Naive thymus-derived CD4-positive, alpha-beta T cell (primary cell): ENCODE measurements at regions of chr4 and their contacts with region 1.

Region 1: DNA sequence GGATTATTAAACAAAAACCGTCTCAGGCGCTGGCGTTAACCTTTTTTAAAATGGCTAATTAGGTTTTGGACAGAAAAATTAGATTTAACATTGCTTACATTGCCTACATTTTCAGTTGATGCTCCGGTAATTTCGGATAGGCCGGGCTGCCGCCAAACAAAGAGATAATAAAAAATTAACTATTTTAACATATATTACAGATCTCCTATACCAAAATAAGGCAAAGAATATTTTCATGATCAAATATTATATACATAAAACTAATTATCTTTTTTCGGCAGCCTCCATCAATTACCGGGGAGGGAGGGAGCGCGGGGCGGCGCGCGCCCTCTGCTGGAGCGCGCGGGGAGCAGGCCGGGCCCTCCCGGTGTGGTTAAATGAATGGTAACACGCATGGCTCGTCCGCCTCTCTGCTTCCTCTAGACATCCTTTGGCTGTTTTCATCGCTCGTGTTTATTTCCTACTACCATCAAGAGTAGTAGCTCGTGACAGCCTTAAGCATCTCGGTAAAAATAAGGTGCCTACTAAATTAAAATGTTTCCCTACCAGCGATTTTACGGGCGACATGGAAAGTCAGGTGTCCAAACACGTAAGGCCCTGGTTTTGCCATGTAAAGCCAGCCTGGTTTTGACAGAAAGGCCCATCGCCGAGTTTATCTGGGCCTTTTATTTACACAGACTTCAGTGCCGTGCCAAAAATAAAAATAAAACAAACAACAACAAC is 52.4 kb upstream of the TMEM33 start:
- DNase-seq: peak in 7 of 9 donors; percentile 36 to 60 (median 45)
- ATAC-seq: peak; percentile 85
- H3K4me3 ChIP-seq: peak overlapping the region; percentile 55
- H3K4me3 Mint-ChIP-seq: peak overlapping the region in 9 of 10 donors; percentile 56 to 82 (median 76)
- H3K27ac ChIP-seq: no peak overlapping the region
- H3K27ac Mint-ChIP-seq: no peak overlapping the region
- H3K4me1 ChIP-seq: peaks cover 0 to 14% of the 10 kb centered on the region in 2 donors
- H3K4me1 Mint-ChIP-seq: peaks cover 2 to 33% (median 20%) of the 10 kb centered on the region in 7 donors
- H3K27me3 ChIP-seq: peaks cover 0 to 27% of the 10 kb centered on the region in 2 donors
- H3K27me3 Mint-ChIP-seq: peaks cover 42 to 87% (median 57%) of the 10 kb centered on the region in 5 donors

Region 2: GRCh38 chr4:41281038-41281634 is 601.6 kb before region 1 on chr4:
- CTCF ChIA-PET with region 1: interaction called, 3 read pairs
- POLR2A ChIA-PET with region 1: no interaction called
- intact Hi-C with region 1: loop called (anchors 1 kb)
- DNase-seq: peak in 5 of 9 donors; percentile 26 to 53 (median 40)
- ATAC-seq: peak; percentile 82
- H3K4me3 ChIP-seq: no peak overlapping the region
- H3K4me3 Mint-ChIP-seq: no peak overlapping the region
- H3K27ac ChIP-seq: no peak overlapping the region
- H3K27ac Mint-ChIP-seq: no peak overlapping the region
- H3K4me1 ChIP-seq: no peaks in the 10 kb centered on the region
- H3K4me1 Mint-ChIP-seq: no peaks in the 10 kb centered on the region
- H3K27me3 ChIP-seq: no peaks in the 10 kb centered on the region
- H3K27me3 Mint-ChIP-seq: peaks cover 0 to 33% (median 10%) of the 10 kb centered on the region in 5 donors

Region 3: GRCh38 chr4:41692717-41693345 is 190.0 kb before region 1 on chr4:
- CTCF ChIA-PET with region 1: no interaction called
- POLR2A ChIA-PET with region 1: no interaction called
- intact Hi-C with region 1: loop called in 1 of 2 experiments (anchors 1 kb)
- DNase-seq: peak in 1 of 9 donors; percentile 22
- ATAC-seq: no peak
- H3K4me3 ChIP-seq: no peak overlapping the region
- H3K4me3 Mint-ChIP-seq: no peak overlapping the region
- H3K27ac ChIP-seq: no peak overlapping the region
- H3K27ac Mint-ChIP-seq: no peak overlapping the region
- H3K4me1 ChIP-seq: no peaks in the 10 kb centered on the region
- H3K4me1 Mint-ChIP-seq: no peaks in the 10 kb centered on the region
- H3K27me3 ChIP-seq: no peaks in the 10 kb centered on the region
- H3K27me3 Mint-ChIP-seq: peaks cover 0 to 20% (median 0%) of the 10 kb centered on the region in 5 donors

Region 4: DNA sequence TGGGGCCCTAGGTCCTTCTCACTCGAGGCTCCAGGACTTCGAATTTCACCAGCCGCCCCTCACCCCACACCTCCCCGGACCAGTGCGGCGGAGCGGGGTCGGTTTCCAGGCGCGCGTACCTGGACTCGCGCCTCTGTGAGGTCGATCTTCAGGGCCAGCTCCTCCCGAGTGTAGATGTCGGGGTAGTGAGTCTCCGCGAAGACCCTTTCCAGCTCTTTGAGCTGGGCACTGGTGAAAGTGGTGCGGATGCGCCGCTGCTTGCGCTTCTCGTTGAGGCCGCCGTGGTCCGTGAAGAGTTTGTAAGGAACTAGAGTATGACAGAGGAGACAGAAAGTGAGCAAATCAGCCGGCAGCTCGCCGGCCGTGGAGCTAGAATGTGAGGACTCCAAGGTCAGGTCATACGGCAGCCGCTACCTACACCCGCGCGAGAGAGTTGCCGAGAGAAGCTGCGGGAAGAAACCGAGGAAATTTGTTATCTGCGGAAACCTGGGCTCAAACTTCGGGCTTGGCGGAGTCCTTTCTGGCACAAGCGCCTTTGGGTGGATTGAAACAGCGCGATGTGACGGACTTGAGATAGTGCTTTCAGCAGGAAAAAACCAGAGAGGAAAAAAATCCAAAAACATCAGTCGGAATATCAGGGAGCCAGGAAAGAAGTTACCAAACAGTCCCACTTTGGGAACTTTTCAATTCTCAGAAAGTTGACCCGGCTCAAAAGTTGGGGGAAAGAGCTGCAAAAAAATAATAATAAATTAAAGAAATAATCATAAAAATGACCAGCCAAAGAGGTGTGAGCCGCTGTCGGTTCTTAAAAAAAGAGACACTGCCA is 135.3 kb before region 1 on chr4:
- CTCF ChIA-PET with region 1: no interaction called
- POLR2A ChIA-PET with region 1: no interaction called
- intact Hi-C with region 1: loop called in 1 of 2 experiments (anchors 2 kb)
- DNase-seq: no peak
- ATAC-seq: no peak
- H3K4me3 ChIP-seq: no peak overlapping the region
- H3K4me3 Mint-ChIP-seq: no peak overlapping the region
- H3K27ac ChIP-seq: no peak overlapping the region
- H3K27ac Mint-ChIP-seq: no peak overlapping the region
- H3K4me1 ChIP-seq: no peaks in the 10 kb centered on the region
- H3K4me1 Mint-ChIP-seq: peaks cover 0 to 11% (median 6%) of the 10 kb centered on the region in 7 donors
- H3K27me3 ChIP-seq: peaks cover 0 to 12% of the 10 kb centered on the region in 2 donors
- H3K27me3 Mint-ChIP-seq: peaks cover 72 to 84% (median 83%) of the 10 kb centered on the region in 5 donors

Region 5: DNA sequence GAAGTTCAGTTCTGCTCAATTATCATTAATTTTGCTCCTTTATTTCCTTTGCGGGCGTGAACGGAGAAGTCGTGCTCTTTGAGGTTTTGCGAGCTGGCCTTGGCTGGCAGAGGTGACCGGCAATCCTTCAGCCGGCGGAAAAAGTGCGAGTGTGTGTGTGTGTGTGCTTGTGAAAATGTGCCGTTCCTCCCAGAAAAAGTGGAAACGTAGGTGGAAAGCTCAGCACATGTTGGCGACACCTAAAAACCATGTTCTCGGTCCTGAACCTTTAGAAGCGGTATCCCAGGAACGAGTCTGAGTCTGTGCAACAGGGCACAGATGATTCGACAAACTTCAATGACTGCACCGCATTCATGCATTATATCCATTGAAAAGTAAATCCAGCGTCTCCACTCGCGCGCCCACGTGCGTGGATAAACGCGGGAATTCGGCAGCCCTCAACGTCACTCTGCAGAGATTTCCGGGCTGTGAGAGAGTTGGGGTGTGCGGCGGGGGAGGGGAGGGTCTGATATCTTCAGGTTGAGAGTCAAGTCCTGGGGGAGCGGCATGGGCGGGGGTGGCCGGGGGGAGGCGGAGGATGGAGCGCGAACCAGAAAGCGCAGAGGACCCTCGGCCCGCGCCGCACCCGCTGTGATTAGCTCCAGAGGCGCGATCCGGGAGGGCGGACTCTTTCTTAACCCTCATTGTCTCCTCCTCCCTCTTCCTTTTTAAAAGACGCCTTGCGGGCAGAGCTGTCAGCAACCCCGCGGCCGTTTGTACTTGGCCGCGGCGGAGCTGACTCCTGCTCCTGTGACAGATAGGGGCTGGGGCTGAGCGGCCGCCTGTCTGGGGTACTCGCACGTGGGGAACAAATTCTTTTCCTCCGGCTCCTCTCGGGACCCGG is 514.2 kb after region 1 on chr4 and contains the start of gene SHISA3:
- CTCF ChIA-PET with region 1: no interaction called
- POLR2A ChIA-PET with region 1: no interaction called
- intact Hi-C with region 1: loop called in 1 of 2 experiments (anchors 10 kb)
- DNase-seq: no peak
- ATAC-seq: peak; percentile 60
- H3K4me3 ChIP-seq: peak within 1 kb of the TSS; percentile 43
- H3K4me3 Mint-ChIP-seq: peak within 1 kb of the TSS; percentile 74 to 89 (median 86)
- H3K27ac ChIP-seq: no peak within 1 kb of the TSS
- H3K27ac Mint-ChIP-seq: no peak within 1 kb of the TSS
- H3K4me1 ChIP-seq: no peaks in the 10 kb centered on the region
- H3K4me1 Mint-ChIP-seq: peaks cover 9 to 36% (median 29%) of the 10 kb centered on the region in 7 donors
- H3K27me3 ChIP-seq: peaks cover 3 to 4% of the 10 kb centered on the region in 2 donors
- H3K27me3 Mint-ChIP-seq: peaks cover 49 to 70% (median 58%) of the 10 kb centered on the region in 5 donors
- total RNA-seq, gene SHISA3: 0.36 TPM in 1 of 5 experiments, not detected in the others